Endothelial cell of umbilical vein (primary cell): ENCODE measurements at regions of chr6 and their contacts with region 1.

Region 1: DNA sequence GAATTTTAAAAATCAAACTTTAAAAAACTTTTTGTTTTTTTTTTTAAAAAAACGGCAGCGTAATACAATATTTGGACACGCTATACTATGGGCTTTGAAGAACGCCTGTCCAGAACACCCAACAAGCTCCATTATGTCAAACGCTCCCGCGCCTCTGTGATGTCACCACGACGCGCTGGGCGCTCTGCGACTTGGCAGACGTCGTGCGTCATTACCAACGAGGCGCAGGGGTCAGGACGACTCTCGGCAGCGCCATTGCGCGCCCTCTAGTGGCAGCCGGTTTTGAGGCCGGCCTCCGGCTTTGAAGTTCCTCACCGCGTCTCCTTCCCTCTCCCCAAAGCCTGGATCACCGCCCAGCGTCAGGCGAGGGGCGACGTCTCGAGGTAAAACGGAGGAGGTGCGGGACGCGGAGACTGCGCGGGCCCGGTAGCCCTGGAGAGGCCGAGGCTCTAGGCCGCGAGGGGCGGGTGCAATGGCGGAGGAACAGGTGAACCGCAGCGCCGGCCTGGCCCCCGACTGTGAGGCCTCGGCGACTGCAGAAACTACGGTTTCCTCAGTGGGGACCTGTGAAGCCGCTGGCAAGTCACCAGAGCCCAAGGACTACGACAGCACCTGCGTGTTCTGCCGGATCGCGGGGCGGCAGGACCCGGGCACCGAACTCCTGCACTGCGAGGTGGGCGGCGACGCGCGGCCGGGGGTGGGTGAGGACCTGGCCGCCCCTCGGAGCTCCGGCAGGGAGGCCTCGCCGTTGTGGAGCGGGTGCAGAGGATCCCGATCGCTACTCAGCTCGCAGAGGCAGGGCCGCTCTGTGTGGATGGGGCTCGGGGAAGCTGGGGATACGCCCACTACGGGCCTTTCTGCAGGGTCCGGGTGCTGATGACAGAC is at the start of gene HINT3:
- DNase-seq: peak; percentile 97
- H3K4me3 ChIP-seq: peak within 1 kb of the TSS; percentile 46 to 74 (median 58)
- H3K27ac ChIP-seq: peak within 1 kb of the TSS; percentile 47
- H3K4me1 ChIP-seq: peaks cover 15% of the 10 kb centered on the region
- H3K27me3 ChIP-seq: no peaks in the 10 kb centered on the region
- CTCF ChIP-seq: peak; percentile 99
- POLR2A ChIP-seq: peak; percentile 52
- total RNA-seq, gene HINT3: 8.4 and 9.7 TPM in 2 replicates

Region 2: GRCh38 chr6:125574604-125575003 is 382.1 kb before region 1 on chr6:
- CTCF ChIA-PET with region 1: no interaction called
- POLR2A ChIA-PET with region 1: no interaction called
- dilution Hi-C with region 1: no loop called
- intact Hi-C with region 1: no loop called
- DNase-seq: no peak
- H3K4me3 ChIP-seq: no peak overlapping the region
- H3K27ac ChIP-seq: no peak overlapping the region
- H3K4me1 ChIP-seq: no peaks in the 10 kb centered on the region
- H3K27me3 ChIP-seq: peaks cover 5 to 38% of the 10 kb centered on the region in 2 experiments
- CTCF ChIP-seq: no peak
- POLR2A ChIP-seq: no peak

Region 3: GRCh38 chr6:125779924-125780539 is 176.7 kb before region 1 on chr6:
- CTCF ChIA-PET with region 1: interaction called, 138 read pairs
- POLR2A ChIA-PET with region 1: no interaction called
- dilution Hi-C with region 1: no loop called
- intact Hi-C with region 1: loop called (anchors 1 kb)
- DNase-seq: peak; percentile 96
- H3K4me3 ChIP-seq: peak overlapping the region; percentile 62 to 95 (median 84)
- H3K27ac ChIP-seq: peak overlapping the region; percentile 94
- H3K4me1 ChIP-seq: peaks cover 8% of the 10 kb centered on the region
- H3K27me3 ChIP-seq: peaks cover 8 to 10% of the 10 kb centered on the region in 2 experiments
- CTCF ChIP-seq: peak in 1 of 2 donors; percentile 5
- POLR2A ChIP-seq: no peak

Region 4: DNA sequence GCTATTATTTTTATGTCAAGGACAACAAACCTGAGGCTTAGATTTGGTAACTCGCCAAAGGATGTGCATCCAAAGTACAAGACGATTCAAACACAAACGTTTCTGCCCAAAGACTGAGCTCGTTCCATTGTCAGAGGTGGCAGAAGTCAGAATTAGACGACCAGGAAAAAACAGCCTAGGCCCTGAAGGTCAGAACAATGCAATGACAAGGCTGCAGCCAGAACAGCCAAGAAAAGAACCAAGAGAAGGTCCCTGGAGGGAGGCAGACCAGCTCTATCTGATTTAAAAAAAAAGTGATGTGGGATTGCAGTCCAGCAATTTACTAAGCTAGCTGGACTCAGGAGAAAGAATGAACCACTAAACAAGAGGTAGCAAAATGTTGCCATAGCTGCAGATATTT is 111.8 kb before region 1 on chr6:
- CTCF ChIA-PET with region 1: interaction called, 13 read pairs
- POLR2A ChIA-PET with region 1: no interaction called
- dilution Hi-C with region 1: no loop called
- intact Hi-C with region 1: no loop called
- DNase-seq: peak; percentile 50
- H3K4me3 ChIP-seq: no peak overlapping the region
- H3K27ac ChIP-seq: no peak overlapping the region
- H3K4me1 ChIP-seq: peaks cover 15% of the 10 kb centered on the region
- H3K27me3 ChIP-seq: no peaks in the 10 kb centered on the region
- CTCF ChIP-seq: no peak
- POLR2A ChIP-seq: no peak

Region 5: GRCh38 chr6:125906158-125906998 is 50.4 kb before region 1 on chr6:
- CTCF ChIA-PET with region 1: interaction called, 123 read pairs
- POLR2A ChIA-PET with region 1: interaction called, 4 read pairs
- dilution Hi-C with region 1: no loop called
- intact Hi-C with region 1: loop called (anchors 1 kb)
- DNase-seq: peak; percentile 65
- H3K4me3 ChIP-seq: no peak overlapping the region
- H3K27ac ChIP-seq: no peak overlapping the region
- H3K4me1 ChIP-seq: peaks cover 26% of the 10 kb centered on the region
- H3K27me3 ChIP-seq: no peaks in the 10 kb centered on the region
- CTCF ChIP-seq: peak; percentile 80 to 83
- POLR2A ChIP-seq: no peak

Region 6: GRCh38 chr6:125931733-125932450 is 24.9 kb before region 1 on chr6:
- CTCF ChIA-PET with region 1: interaction called, 15 read pairs
- POLR2A ChIA-PET with region 1: no interaction called
- dilution Hi-C with region 1: no loop called
- intact Hi-C with region 1: no loop called
- DNase-seq: peak; percentile 38
- H3K4me3 ChIP-seq: no peak overlapping the region
- H3K27ac ChIP-seq: no peak overlapping the region
- H3K4me1 ChIP-seq: no peaks in the 10 kb centered on the region
- H3K27me3 ChIP-seq: no peaks in the 10 kb centered on the region
- CTCF ChIP-seq: no peak
- POLR2A ChIP-seq: no peak

Region 7: GRCh38 chr6:125986300-125987025 is 29.7 kb after region 1 on chr6 and contains the start of gene TRMT11:
- CTCF ChIA-PET with region 1: interaction called, 14 read pairs
- POLR2A ChIA-PET with region 1: interaction called, 3 read pairs
- dilution Hi-C with region 1: no loop called
- intact Hi-C with region 1: no loop called
- DNase-seq: peak; percentile 87
- H3K4me3 ChIP-seq: peak within 1 kb of the TSS; percentile 55 to 92 (median 82)
- H3K27ac ChIP-seq: peak within 1 kb of the TSS; percentile 51
- H3K4me1 ChIP-seq: peaks cover 14% of the 10 kb centered on the region
- H3K27me3 ChIP-seq: no peaks in the 10 kb centered on the region
- CTCF ChIP-seq: no peak
- POLR2A ChIP-seq: peak; percentile 96
- total RNA-seq, gene TRMT11: 10.7 and 11.3 TPM in 2 replicates

Region 8: DNA sequence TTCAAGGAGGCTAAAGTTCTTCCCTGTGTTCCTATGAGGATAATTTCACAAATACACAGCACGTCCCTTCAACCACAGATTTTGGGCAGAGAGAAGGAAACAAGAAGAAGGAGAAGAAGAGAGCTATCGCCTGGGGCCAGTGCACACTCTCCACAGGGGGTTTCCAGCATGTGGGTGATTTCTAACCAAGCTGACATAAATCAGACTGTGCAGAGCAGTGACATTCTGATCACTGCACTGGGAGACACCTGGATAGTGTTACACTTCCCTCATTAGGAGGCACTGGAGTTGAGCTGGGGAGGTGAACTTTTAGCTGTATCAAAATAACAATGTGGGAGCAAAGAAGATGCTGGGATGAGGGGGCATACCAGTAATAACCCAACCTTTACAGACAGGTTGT is 311.3 kb after region 1 on chr6:
- CTCF ChIA-PET with region 1: no interaction called
- POLR2A ChIA-PET with region 1: no interaction called
- dilution Hi-C with region 1: no loop called
- intact Hi-C with region 1: no loop called
- DNase-seq: no peak
- H3K4me3 ChIP-seq: no peak overlapping the region
- H3K27ac ChIP-seq: no peak overlapping the region
- H3K4me1 ChIP-seq: peaks cover 25% of the 10 kb centered on the region
- H3K27me3 ChIP-seq: no peaks in the 10 kb centered on the region
- CTCF ChIP-seq: no peak
- POLR2A ChIP-seq: no peak

Region 9: GRCh38 chr6:127266178-127266891 is 1309.6 kb after region 1 on chr6 and contains the start of gene RNF146:
- CTCF ChIA-PET with region 1: no interaction called
- POLR2A ChIA-PET with region 1: no interaction called
- dilution Hi-C with region 1: no loop called
- intact Hi-C with region 1: no loop called
- DNase-seq: peak; percentile 90
- H3K4me3 ChIP-seq: peak within 1 kb of the TSS; percentile 92 to 99 (median 98)
- H3K27ac ChIP-seq: peak within 1 kb of the TSS; percentile 74
- H3K4me1 ChIP-seq: peaks cover 20% of the 10 kb centered on the region
- H3K27me3 ChIP-seq: no peaks in the 10 kb centered on the region
- CTCF ChIP-seq: peak; percentile 67 to 73
- POLR2A ChIP-seq: no peak
- total RNA-seq, gene RNF146: 43.8 and 48.1 TPM in 2 replicates